ENCODE measurements at regions of chr15 and their contacts with region 1.

Region 1: GRCh38 chr15:43225201-43225949 is 4.6 kb upstream of the EPB42 start:
- DNase-seq: peak; percentile 57
- ATAC-seq: peak; percentile 90
- H3K4me3 Mint-ChIP-seq: no peak overlapping the region
- H3K27ac Mint-ChIP-seq: no peak overlapping the region
- H3K4me1 Mint-ChIP-seq: peaks cover 8% of the 10 kb centered on the region
- H3K27me3 Mint-ChIP-seq: peaks cover 6% of the 10 kb centered on the region

Region 2: GRCh38 chr15:43204016-43204901 is 21.1 kb before region 1 on chr15:
- CTCF ChIA-PET with region 1: interaction called, 14 read pairs
- POLR2A ChIA-PET with region 1: no interaction called
- intact Hi-C with region 1: no loop called
- DNase-seq: peak; percentile 77
- ATAC-seq: peak; percentile 72
- H3K4me3 Mint-ChIP-seq: no peak overlapping the region
- H3K27ac Mint-ChIP-seq: no peak overlapping the region
- H3K4me1 Mint-ChIP-seq: peaks cover 7% of the 10 kb centered on the region
- H3K27me3 Mint-ChIP-seq: peaks cover 2% of the 10 kb centered on the region

Region 3: DNA sequence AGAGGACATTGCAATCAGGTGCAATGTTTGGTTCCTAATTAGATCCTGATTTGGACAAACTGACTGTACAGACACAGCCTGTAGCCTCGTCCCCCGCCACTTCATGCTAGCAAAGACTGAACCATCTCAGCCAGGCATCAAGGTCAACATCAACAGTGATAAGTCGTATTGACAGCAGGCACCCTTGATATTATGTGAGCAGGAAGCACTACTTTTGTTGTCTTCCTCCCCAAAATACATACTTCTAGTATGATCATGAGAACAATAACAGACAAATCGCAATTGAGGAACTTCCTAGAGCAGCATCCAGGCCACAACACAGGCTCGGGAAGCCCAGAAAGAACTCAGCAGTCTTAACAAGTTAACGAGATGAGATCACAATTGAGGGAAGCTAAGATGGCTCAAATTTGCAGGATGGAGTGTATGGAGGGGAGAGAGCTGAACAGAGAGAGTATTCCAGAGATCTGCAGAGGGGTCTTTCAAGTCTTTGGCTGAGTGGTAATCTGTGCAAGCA is 20.9 kb after region 1 on chr15:
- CTCF ChIA-PET with region 1: interaction called, 10 read pairs
- POLR2A ChIA-PET with region 1: no interaction called
- intact Hi-C with region 1: no loop called
- DNase-seq: no peak
- ATAC-seq: no peak
- H3K4me3 Mint-ChIP-seq: no peak overlapping the region
- H3K27ac Mint-ChIP-seq: no peak overlapping the region
- H3K4me1 Mint-ChIP-seq: peaks cover 8% of the 10 kb centered on the region
- H3K27me3 Mint-ChIP-seq: peaks cover 5% of the 10 kb centered on the region

Region 4: GRCh38 chr15:43268111-43269105 is 43.0 kb after region 1 on chr15:
- CTCF ChIA-PET with region 1: interaction called, 18 read pairs
- POLR2A ChIA-PET with region 1: interaction called, 3 read pairs
- intact Hi-C with region 1: loop called in 1 of 2 experiments (anchors 5 kb)
- DNase-seq: peak; percentile 50
- ATAC-seq: no peak
- H3K4me3 Mint-ChIP-seq: no peak overlapping the region
- H3K27ac Mint-ChIP-seq: no peak overlapping the region
- H3K4me1 Mint-ChIP-seq: peaks cover 5% of the 10 kb centered on the region
- H3K27me3 Mint-ChIP-seq: peaks cover 10% of the 10 kb centered on the region

Measured in activated CD4-positive, alpha-beta T cell treated with anti-CD3 and anti-CD28 coated beads for 36 hours (primary cell).